KBM-7 (cell line): ENCODE measurements at regions of chr9 and their contacts with region 1.

Region 1: DNA sequence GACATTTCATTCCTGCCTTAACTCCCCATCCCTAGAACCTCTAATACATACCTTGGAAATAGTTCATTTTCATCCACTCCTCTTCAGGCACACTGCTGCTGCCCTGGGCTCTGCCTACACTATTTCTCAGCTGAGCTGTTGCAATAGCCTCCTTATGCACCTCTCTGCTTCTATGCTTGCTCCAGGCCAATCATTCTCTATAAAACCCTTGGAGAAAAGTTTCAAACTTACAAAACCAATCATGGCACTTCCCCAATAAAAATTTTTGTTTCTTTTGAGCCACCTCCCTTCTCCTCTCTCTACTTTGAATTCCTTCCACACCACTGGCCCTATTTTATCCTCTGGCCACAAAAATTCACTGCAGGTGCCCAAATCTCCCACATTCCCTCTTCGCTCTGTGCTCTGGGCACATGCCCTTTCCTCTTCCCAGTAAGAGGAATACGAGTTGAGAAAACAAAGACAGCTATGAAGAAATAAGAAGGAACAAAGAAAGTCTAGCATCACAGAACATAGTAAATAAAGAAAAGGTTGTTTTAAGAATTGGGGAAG is 301.4 kb downstream of the ELAVL2 start:
- DNase-seq: no peak

Region 2: DNA sequence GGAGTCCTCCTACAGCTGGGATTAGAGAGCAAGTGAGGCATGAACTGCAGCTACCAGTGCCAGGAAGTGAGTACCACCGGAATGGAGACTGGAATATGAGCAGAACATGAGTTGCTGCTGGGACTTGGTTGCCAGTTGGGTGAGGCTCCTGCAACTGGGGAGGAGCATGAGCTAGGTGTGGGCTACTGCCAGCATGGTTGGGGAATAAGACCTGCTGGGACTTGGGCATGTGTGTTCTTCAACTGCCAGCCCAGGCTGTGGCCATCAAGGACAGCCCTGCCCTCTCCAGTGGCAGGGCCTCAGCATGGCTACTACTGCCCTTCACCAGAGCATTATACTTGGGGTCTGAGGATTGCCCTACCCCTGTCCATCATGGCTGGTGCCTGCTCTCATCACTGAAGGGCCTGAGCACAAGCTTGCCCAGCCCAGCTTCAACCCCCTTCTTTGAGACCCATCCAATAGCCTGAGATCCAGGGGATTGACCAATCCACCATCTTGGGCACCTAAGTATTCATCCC is 363.7 kb before region 1 on chr9:
- in situ Hi-C with region 1: no loop called
- DNase-seq: no peak

Region 3: DNA sequence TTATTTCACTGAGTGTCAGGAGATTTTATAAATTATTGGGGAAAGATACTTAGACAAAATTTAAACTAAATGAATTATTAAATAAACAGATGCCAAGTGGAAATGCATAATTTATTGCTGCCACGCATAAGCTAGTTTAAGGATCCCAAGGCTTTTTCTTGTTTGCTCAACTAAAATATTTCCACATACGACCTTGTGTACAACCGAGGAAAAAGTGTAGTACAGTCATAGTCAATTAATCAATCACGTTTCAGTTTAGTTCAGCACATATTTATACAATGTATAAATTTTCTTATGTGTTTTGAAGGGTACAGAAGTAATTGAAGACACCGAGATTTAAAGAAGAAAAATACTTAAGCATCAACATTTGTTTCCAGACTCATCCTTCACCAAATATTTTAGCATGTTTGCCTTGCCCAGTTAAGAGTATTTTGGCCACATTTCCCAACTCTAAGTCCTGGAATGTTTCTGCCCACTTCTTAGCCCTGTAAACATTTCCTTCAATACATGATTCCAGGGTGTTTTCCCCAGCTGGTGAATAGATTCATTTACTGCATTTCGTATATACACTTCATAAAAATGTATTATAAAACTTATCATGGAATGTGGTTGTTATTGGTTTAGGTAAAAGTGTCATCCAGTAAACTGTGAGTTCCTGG is 351.6 kb before region 1 on chr9:
- in situ Hi-C with region 1: no loop called
- DNase-seq: no peak

Region 4: DNA sequence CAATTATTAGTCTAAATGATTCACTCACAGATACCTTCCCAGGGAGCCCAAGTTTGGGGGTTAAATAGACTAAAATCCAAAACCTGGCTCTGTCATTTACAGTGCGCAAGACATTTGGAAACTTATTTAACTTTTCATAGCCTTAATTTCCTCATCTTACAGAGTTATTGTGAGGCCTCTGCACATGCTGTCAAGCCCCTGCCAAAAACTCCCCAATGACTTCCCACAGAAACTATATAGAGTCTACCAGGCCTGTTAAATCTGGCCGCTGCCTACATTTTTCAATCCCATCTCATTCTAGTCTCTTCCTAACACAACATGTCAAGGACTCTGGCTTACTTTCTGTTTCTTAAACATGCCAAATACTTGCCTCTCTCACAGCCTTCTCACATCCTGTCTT is 111.1 kb before region 1 on chr9:
- in situ Hi-C with region 1: no loop called
- DNase-seq: no peak

Region 5: DNA sequence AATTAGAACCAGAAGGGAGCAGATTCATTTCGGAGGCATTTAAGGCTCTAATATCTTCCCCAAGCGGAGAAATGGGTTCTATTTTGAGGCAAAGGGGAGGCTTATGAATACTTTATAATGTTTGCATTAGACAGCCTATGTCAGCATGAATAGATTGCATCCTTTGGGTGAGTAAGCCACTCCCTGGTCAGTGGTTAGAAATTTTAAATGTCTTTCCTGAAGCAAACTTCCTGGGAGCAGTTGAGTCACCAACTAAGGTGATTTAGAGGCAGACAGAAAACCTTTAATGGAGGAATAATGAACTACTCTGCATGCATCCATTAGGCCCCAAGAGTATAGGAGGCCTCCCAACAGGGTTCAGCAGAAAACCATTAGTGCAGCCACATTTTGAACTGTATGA is 96.5 kb after region 1 on chr9:
- in situ Hi-C with region 1: loop called (anchors 25 kb)
- DNase-seq: no peak